ENCODE measurements at regions of chr9 and their contacts with region 1.

Region 1: GRCh38 chr9:87766703-87767102 is 40.8 kb downstream of the CTSL start:
- DNase-seq: peak; percentile 49
- H3K4me3 Mint-ChIP-seq: no peak overlapping the region
- H3K27ac Mint-ChIP-seq: no peak overlapping the region
- H3K4me1 Mint-ChIP-seq: peaks cover 6% of the 10 kb centered on the region
- H3K27me3 Mint-ChIP-seq: peaks cover 13% of the 10 kb centered on the region

Region 2: DNA sequence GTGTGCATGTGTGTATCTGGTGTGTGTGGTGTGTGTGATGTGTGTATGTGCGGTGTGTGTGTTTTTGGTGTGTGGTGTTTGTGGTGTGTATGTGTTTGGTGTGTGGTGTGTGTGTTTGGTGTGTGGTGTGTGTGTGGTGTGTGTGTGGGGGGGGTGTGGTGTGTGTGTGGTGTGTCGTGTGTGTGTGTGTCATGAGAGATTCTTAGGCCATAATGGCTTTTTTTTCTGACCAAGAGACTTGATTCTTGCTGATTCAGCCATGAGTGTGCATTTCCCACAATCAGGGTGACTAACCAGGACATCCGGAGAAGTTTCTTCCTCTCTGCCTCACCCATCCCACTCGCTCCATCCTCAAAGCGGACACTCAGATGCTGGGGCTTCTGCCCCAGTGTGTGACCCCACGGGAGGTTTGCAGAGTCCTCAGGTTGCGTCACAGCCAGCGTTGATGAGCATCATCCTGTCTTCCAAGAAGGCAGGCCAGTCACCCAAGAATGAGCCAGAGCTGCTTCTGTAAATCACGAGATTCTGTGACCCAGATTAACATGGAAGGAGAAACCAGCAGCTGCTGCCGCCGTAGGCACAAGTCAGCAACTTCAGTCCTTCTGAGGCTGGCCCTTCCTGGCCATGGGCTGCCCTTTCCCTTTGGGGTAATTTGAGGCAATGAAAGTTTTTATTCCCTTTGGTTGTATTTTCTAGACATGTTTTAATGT is 53.3 kb before region 1 on chr9:
- CTCF ChIA-PET with region 1: no interaction called
- POLR2A ChIA-PET with region 1: no interaction called
- intact Hi-C with region 1: loop called (anchors 2 kb)
- DNase-seq: peak; percentile 83
- H3K4me3 Mint-ChIP-seq: peak overlapping the region; percentile 10
- H3K27ac Mint-ChIP-seq: peak overlapping the region; percentile 60
- H3K4me1 Mint-ChIP-seq: peaks cover 37% of the 10 kb centered on the region
- H3K27me3 Mint-ChIP-seq: peaks cover 5% of the 10 kb centered on the region

Region 3: DNA sequence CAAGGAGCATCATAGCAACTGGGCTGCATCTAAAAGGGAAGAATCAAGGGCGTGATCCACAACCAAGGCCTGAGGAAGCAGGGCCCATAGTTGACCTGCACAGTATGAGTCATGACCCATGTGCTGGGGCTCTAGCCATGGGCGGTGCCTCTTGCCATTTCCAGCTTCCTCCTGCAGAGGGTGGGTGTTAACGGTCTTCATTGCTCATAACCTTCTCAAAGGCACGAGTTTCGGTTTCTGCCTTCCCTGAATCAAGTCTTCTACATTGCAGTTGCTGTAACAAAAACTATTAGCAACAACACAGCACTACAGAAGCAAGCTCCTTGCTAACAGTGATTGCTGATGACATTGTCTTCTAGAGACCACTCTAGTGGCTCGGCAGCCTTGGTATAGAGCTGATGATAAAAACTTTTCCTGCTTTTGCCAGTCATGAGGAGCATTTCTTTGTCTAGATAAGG is 26.2 kb after region 1 on chr9:
- CTCF ChIA-PET with region 1: no interaction called
- POLR2A ChIA-PET with region 1: no interaction called
- intact Hi-C with region 1: loop called (anchors 1 kb)
- DNase-seq: peak; percentile 83
- H3K4me3 Mint-ChIP-seq: peak overlapping the region; percentile 4
- H3K27ac Mint-ChIP-seq: peak overlapping the region; percentile 75
- H3K4me1 Mint-ChIP-seq: peaks cover 46% of the 10 kb centered on the region
- H3K27me3 Mint-ChIP-seq: no peaks in the 10 kb centered on the region

Region 4: DNA sequence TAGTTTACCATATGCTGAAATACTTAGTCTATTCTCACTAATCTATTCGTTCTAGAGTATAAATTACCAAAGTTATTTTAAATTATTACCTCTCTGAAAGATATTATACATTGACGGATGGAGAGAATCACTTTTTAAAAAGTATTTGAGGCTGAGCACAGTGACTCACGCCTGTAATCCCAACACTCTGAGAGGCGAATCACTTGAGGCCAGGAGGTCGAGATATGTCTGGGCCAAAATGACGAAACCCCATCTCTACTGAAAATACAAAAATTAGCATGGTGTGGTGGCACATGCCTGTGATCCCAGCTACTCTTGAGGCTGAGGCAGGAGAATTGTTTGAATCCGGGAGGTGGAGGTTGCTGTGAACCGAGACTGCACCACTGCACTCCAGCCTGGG is 435.6 kb after region 1 on chr9:
- CTCF ChIA-PET with region 1: no interaction called
- POLR2A ChIA-PET with region 1: no interaction called
- intact Hi-C with region 1: no loop called
- DNase-seq: no peak
- H3K4me3 Mint-ChIP-seq: no peak overlapping the region
- H3K27ac Mint-ChIP-seq: no peak overlapping the region
- H3K4me1 Mint-ChIP-seq: no peaks in the 10 kb centered on the region
- H3K27me3 Mint-ChIP-seq: peaks cover 12% of the 10 kb centered on the region